Body of pancreas (tissue), 4 donors: ENCODE measurements at regions of chr4 and their contacts with region 1.

Region 1: GRCh38 chr4:187606581-187606980 is 389.0 kb upstream of the ZFP42 start:
- DNase-seq: peak; percentile 33 to 44 (median 37)
- ATAC-seq: no peak
- H3K4me3 ChIP-seq: no peak overlapping the region
- H3K27ac ChIP-seq: no peak overlapping the region
- H3K4me1 ChIP-seq: no peaks in the 10 kb centered on the region
- H3K27me3 ChIP-seq: no peaks in the 10 kb centered on the region
- CTCF ChIP-seq: peak; percentile 60 to 97 (median 82)
- POLR2A ChIP-seq: no peak

Region 2: GRCh38 chr4:187469627-187470026 is 137.0 kb before region 1 on chr4:
- intact Hi-C with region 1: no loop called
- DNase-seq: no peak
- ATAC-seq: no peak
- H3K4me3 ChIP-seq: no peak overlapping the region
- H3K27ac ChIP-seq: no peak overlapping the region
- H3K4me1 ChIP-seq: no peaks in the 10 kb centered on the region
- H3K27me3 ChIP-seq: no peaks in the 10 kb centered on the region
- CTCF ChIP-seq: no peak
- POLR2A ChIP-seq: no peak

Region 3: DNA sequence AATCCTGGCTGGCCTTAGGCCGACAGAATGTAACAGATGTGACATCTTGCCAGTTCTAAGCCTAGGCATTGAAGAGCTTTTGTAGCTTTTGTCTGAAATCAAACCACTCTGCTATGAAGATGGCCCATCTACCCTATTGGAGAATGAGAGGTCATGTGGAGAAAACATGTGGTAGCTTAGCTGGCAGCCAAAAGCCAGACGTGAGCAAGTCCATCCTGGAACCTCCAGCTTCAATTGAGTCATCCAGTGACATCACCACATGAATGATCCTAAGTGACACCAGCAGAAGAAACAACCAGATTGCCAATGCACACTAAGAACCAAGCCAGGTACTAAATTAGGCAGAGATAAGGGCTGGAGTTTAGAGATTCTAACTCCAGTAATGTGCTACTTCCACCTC is 234.2 kb after region 1 on chr4:
- intact Hi-C with region 1: no loop called
- DNase-seq: no peak
- ATAC-seq: no peak
- H3K4me3 ChIP-seq: no peak overlapping the region
- H3K27ac ChIP-seq: no peak overlapping the region
- H3K4me1 ChIP-seq: no peaks in the 10 kb centered on the region
- H3K27me3 ChIP-seq: no peaks in the 10 kb centered on the region
- CTCF ChIP-seq: no peak
- POLR2A ChIP-seq: no peak

Region 4: DNA sequence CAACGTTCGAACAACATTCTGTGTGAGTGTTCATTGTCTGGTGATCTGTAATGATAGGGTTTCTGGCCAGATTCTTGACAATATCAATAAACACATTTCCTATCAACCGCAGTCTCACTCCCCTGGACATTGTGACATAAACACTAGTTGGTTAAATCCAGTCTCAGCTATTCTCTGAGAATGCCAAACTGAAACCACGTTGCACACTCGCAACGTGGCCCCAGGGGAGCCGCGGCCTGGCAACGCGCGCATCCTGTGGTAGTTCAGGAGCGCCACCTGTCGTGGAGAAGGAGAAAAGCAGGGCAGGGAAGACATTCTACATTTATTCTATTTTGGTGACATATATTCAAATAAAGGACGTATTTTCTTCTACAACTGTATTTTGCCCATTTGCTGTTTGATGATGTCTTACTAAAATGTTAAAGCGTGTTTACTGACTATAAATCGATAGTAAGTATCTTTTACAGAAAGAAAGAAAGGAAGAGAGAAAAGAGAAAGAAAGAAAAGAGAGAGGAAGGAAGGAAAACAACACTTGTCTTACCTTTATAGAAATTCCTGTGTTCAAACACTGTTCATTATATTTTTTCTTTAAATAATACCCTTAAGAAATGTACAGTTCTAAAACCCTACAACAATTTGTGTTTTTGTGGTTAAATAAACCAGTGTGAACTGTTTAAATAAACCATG is 1595.7 kb after region 1 on chr4:
- intact Hi-C with region 1: loop called (anchors 10 kb)
- DNase-seq: peak; percentile 54 to 68 (median 60)
- ATAC-seq: peak; percentile 72
- H3K4me3 ChIP-seq: no peak overlapping the region
- H3K27ac ChIP-seq: no peak overlapping the region
- H3K4me1 ChIP-seq: peaks cover 12% of the 10 kb centered on the region
- H3K27me3 ChIP-seq: no peaks in the 10 kb centered on the region
- CTCF ChIP-seq: peak; percentile 69 to 90 (median 79)
- POLR2A ChIP-seq: no peak